ENCODE measurements at regions of chr12 and their contacts with region 1.

Region 1: DNA sequence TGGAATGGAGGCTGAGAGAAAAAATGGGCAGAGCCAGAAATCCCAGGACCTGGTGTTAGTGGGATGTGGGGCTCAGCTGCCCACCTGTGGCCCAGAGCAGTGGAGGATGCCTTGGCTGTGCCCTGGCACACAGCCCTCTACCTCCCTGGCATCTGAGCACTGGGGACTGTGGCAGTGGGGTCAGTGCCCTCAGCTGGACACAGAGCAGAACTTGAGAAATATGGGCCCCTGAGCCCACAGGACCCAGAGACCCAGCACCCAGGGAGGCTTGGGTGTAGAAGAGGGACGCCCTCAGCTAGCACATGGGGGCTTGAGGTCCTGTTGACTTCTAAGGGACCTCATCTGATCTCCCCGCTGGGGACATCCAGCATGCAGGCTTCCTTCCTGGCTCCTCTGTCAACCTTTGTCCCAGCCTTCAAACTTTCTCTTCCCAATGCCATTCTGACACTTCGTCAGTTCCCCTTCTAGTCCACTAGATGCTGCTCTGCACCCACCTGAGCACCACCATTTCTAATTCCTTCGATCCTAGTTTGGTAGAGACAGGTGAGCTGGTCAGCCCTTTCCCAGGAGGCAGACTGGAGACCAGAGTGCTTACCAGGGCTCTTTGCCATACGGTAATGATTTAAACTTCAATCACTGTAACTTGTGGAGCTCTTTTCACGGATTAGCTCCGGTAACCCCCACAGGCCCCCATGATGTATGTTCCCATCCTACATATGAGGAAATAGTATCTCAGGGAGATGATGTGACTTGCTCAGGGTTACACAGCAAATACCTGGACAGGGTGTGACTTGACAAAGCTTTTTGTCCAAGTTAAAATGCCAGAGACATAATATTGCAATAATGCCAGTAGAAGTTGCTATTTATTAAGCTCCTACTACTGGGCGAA is 143.7 kb downstream of the ASCL4 start:
- DNase-seq: no peak
- H3K4me3 ChIP-seq: no peak overlapping the region
- H3K27ac ChIP-seq: no peak overlapping the region
- H3K4me1 ChIP-seq: no peaks in the 10 kb centered on the region
- H3K27me3 ChIP-seq: no peaks in the 10 kb centered on the region
- CTCF ChIP-seq: peak; percentile 24

Region 2: DNA sequence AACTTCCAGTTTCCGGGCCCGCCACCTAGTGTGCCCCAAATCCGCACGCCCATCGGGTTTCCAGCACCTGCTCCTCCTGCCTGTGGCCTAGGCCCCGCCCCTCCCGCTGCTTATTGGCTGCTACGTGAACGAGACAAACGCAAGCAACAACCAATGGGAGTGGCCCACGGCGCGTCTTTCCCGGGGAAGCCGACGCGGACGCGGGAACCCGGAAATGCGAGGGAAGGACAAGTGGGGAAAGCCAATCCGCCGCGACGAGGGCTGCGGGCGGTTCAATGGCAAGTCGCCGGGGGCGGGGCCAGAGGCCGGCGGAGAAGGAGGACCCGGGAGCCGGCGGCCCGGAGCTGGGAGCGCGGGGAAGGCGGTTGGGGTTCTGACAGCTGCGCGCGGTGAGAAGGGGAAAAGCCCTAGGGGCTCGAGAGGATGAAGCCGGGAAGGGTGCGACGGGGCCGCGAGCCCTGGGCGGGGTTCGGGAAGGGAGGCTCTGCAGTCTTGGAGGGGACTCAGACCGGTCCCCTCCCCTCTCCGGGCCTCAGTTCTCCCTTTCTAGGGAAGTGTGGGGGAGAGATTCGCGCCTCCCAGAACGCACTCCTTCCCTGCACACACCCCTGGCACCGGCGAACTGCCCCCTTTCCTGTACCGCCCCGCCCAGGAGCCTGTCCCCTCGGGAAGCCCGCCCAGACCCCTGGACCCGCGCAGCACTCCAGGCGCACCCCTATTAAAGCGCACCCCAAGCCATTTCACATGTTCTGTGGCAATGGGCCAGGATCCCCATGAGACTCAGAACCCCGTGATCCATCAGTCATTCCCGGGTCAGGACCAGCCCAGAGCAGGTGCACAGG is 597.0 kb after region 1 on chr12 and contains the start of gene FICD:
- intact Hi-C with region 1: loop called (anchors 5 kb)
- DNase-seq: peak; percentile 100
- H3K4me3 ChIP-seq: peak within 1 kb of the TSS; percentile 90
- H3K27ac ChIP-seq: peak within 1 kb of the TSS; percentile 18
- H3K4me1 ChIP-seq: no peaks in the 10 kb centered on the region
- H3K27me3 ChIP-seq: no peaks in the 10 kb centered on the region
- CTCF ChIP-seq: no peak
- total RNA-seq, gene FICD: 3.5 to 6.2 TPM